ENCODE measurements at regions of chr2 and their contacts with region 1.

Region 1: DNA sequence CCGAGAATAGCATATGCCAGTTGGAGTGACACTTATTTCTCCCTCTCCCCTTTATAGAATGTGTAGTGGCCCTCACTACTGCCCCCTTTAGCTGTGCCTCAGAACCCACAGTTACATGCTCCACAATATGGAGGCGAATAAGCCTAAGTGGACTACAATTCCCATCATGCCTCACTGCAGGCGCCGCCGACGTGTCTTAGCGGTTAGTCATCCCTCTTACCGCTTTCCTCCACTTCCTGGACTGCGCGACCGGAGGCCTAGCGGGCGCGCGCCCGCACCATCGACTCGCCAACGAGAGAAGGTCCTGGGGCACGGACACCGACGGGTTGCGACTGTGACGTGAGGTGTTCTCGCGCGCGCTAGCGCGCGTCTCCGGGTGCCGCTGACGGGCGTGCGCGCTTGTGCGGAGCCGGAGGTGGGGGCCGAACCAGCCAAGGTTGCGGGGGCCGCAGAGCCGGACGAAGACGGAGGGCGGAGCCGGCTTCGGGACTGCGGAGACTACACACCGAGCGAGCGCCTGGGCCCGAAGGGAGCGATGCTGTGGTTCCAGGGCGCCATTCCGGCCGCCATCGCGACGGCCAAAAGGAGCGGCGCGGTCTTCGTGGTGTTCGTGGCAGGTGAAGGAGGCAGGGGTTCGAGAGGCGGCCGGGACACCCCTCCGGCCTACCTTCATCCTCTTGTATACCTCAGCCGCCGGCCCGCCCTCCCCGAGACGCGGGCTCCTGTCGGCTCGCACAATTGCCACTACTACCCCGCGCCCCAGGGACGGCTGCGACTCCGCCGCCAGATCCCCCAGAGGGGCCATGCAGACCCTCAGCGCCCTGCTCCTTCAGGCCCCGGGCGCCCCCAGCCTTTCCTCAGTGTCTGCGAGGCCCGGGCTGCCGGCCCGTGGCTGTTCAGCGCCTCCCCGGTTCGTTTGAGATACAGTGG is at the start of gene UBXN4:
- DNase-seq: peak; percentile 96
- ATAC-seq: peak; percentile 91
- H3K4me3 ChIP-seq: peak within 1 kb of the TSS; percentile 95
- H3K27ac ChIP-seq: peak within 1 kb of the TSS; percentile 74
- H3K4me1 ChIP-seq: 0 out of 2 replicates have a peak, but pooled peaks cover 5% of the 10 kb centered on the region
- H3K27me3 ChIP-seq: no peaks in the 10 kb centered on the region
- CTCF ChIP-seq: peak; percentile 49 to 66 (median 50); a peak in 5 of 6 replicates
- EP300 ChIP-seq: no peak
- POLR2A ChIP-seq: peak; percentile 97
- RAD21 ChIP-seq: no peak
- polyA plus RNA-seq, gene UBXN4: 52.6 to 79.4 TPM

Region 2: DNA sequence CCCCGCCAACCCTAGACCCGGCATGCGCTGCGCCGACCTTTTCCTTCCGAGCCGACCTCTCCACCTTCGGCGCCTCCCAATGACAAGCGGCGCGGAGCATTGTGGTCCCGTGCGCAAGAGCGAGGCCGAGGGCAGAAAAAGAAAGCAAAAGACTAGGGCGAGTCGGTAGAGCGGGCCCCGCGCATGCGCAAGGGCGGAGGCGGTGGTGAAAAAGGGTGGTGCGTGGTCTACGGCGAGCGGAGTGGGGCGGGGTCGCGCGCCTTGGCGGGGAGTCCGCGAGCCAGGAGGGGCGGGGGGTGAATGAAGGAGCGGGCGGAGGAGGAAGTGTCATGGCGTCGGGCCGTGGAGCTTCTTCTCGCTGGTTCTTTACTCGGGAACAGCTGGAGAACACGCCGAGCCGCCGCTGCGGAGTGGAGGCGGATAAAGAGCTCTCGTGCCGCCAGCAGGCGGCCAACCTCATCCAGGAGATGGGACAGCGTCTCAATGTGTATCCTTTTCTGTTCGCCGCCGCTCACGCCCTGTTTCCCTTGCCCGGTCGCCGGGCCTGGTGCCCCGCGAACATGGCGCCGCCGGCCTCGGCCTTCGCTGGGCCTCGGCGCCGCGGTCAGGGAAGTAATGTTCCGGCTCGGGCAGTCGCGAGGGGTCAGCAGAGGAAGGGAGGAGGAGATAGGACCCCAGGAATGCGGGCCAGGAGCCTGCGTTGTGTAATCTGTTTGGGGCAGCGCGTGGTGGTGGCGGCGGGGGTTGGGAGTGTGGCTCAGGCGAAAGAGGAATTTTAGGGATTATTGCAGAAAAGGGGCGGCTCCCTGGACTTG is 822.9 kb before region 1 on chr2 and contains the start of gene CCNT2:
- CTCF ChIA-PET with region 1: no interaction called
- POLR2A ChIA-PET with region 1: no interaction called
- RAD21 ChIA-PET with region 1: no interaction called
- SMC1A ChIA-PET with region 1: no interaction called
- in situ Hi-C with region 1: no loop called
- intact Hi-C with region 1: loop called (anchors 5 kb)
- DNase-seq: peak; percentile 95
- ATAC-seq: peak; percentile 89
- H3K4me3 ChIP-seq: peak within 1 kb of the TSS; percentile 91
- H3K27ac ChIP-seq: peak within 1 kb of the TSS; percentile 99
- H3K4me1 ChIP-seq: peaks cover 6% of the 10 kb centered on the region
- H3K27me3 ChIP-seq: no peaks in the 10 kb centered on the region
- CTCF ChIP-seq: no peak
- EP300 ChIP-seq: peak in 1 of 2 experiments; percentile 35; a peak in 1 of 4 replicates
- POLR2A ChIP-seq: peak; percentile 91
- RAD21 ChIP-seq: no peak
- polyA plus RNA-seq, gene CCNT2: 6.0 to 7.6 TPM

Region 3: DNA sequence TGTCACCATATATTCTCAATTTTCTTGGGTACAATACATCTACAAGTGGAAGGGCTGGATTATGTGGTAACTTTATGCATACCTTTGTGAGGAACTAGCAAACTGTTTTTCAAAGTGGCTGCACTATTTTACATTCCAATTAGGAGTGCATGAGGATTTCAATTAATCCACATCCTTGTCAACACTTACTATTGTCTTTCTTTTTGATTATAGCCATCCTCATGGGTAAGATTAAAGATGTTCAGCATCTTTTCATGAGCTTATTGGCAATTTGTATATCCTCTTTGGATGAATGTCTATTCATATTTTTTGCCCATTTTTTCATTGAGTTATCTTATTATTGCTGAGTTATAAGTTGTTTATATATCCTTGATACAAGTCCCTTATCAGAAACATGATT is 284.4 kb before region 1 on chr2:
- CTCF ChIA-PET with region 1: no interaction called
- POLR2A ChIA-PET with region 1: interaction called, 11 read pairs
- RAD21 ChIA-PET with region 1: no interaction called
- SMC1A ChIA-PET with region 1: no interaction called
- in situ Hi-C with region 1: no loop called
- intact Hi-C with region 1: no loop called
- DNase-seq: no peak
- ATAC-seq: no peak
- H3K4me3 ChIP-seq: no peak overlapping the region
- H3K27ac ChIP-seq: no peak overlapping the region
- H3K4me1 ChIP-seq: no peaks in the 10 kb centered on the region
- H3K27me3 ChIP-seq: no peaks in the 10 kb centered on the region
- CTCF ChIP-seq: no peak
- EP300 ChIP-seq: no peak
- POLR2A ChIP-seq: no peak
- RAD21 ChIP-seq: no peak

Region 4: GRCh38 chr2:135531231-135532228 is 210.1 kb before region 1 on chr2 and contains the start of gene R3HDM1:
- CTCF ChIA-PET with region 1: interaction called, 4 read pairs
- POLR2A ChIA-PET with region 1: no interaction called
- RAD21 ChIA-PET with region 1: interaction called, 4 read pairs
- SMC1A ChIA-PET with region 1: interaction called, 4 read pairs
- in situ Hi-C with region 1: no loop called
- intact Hi-C with region 1: loop called (anchors 2 kb)
- DNase-seq: peak; percentile 100
- ATAC-seq: peak; percentile 89
- H3K4me3 ChIP-seq: peak within 1 kb of the TSS; percentile 89
- H3K27ac ChIP-seq: peak within 1 kb of the TSS; percentile 99
- H3K4me1 ChIP-seq: peaks cover 3% of the 10 kb centered on the region; the same call in 1 of the 2 replicates
- H3K27me3 ChIP-seq: no peaks in the 10 kb centered on the region
- CTCF ChIP-seq: peak in 2 of 3 experiments; percentile 6 to 27; a peak in 1 of 6 replicates
- EP300 ChIP-seq: no peak
- POLR2A ChIP-seq: peak; percentile 76
- RAD21 ChIP-seq: peak; percentile 48
- polyA plus RNA-seq, gene R3HDM1: 16.8 to 16.9 TPM

Region 5: DNA sequence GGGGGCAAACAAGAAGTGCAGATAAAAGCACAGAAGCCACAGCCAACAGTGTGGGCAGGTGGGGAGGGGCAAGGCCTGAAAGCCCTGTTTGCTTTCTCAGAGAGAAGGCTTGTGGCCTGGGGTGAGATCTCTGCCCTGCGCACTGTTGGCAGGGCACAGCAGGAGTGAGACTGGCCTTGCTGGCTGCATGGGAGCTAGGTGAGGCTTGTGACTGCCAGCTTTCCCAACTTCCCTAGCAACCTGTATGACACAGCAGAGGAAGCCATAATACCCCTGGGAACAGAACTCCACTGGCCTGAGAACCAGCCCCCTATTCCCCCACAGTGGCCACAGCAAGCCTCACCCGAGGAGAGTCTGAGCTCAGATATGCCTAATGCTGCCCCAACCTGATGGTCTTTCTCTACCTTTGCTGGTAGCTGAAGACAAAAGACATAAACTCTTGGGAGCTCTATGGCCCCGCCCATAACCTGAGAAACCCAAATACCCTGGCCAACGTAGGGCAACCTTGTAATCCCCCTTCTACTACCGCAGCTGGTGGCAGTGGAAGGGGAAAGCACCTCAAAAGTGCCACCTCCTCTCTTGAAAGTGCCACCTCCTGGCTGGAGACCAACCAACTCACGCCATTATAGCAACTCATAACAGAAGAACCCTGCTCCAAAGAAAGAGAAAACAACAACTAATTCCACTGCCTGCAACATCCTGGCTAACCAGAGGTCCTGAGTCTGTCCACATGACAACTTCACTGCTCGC is 50.9 kb after region 1 on chr2:
- CTCF ChIA-PET with region 1: interaction called, 46 read pairs
- POLR2A ChIA-PET with region 1: interaction called, 5 read pairs
- RAD21 ChIA-PET with region 1: interaction called, 4 read pairs
- SMC1A ChIA-PET with region 1: interaction called, 14 read pairs
- in situ Hi-C with region 1: no loop called
- intact Hi-C with region 1: no loop called
- DNase-seq: peak; percentile 51
- ATAC-seq: peak; percentile 79
- H3K4me3 ChIP-seq: no peak overlapping the region; the same call in 1 of the 2 replicates
- H3K27ac ChIP-seq: peak overlapping the region; percentile 35; the same call in 1 of the 2 replicates
- H3K4me1 ChIP-seq: peaks cover 12% of the 10 kb centered on the region
- H3K27me3 ChIP-seq: no peaks in the 10 kb centered on the region
- CTCF ChIP-seq: no peak
- EP300 ChIP-seq: no peak
- POLR2A ChIP-seq: no peak
- RAD21 ChIP-seq: no peak

Region 6: GRCh38 chr2:135851858-135852257 is 110.2 kb after region 1 on chr2:
- CTCF ChIA-PET with region 1: no interaction called
- POLR2A ChIA-PET with region 1: interaction called, 4 read pairs
- RAD21 ChIA-PET with region 1: no interaction called
- SMC1A ChIA-PET with region 1: interaction called, 4 read pairs
- in situ Hi-C with region 1: no loop called
- intact Hi-C with region 1: loop called (anchors 5 kb)
- DNase-seq: no peak
- ATAC-seq: no peak
- H3K4me3 ChIP-seq: no peak overlapping the region
- H3K27ac ChIP-seq: no peak overlapping the region
- H3K4me1 ChIP-seq: no peaks in the 10 kb centered on the region
- H3K27me3 ChIP-seq: no peaks in the 10 kb centered on the region
- CTCF ChIP-seq: no peak
- EP300 ChIP-seq: no peak
- POLR2A ChIP-seq: no peak
- RAD21 ChIP-seq: no peak

Region 7: GRCh38 chr2:135870571-135870970 is 128.9 kb after region 1 on chr2:
- CTCF ChIA-PET with region 1: no interaction called
- POLR2A ChIA-PET with region 1: interaction called, 4 read pairs
- RAD21 ChIA-PET with region 1: no interaction called
- SMC1A ChIA-PET with region 1: no interaction called
- in situ Hi-C with region 1: no loop called
- intact Hi-C with region 1: loop called (anchors 5 kb)
- DNase-seq: no peak
- ATAC-seq: peak; percentile 63
- H3K4me3 ChIP-seq: no peak overlapping the region
- H3K27ac ChIP-seq: no peak overlapping the region
- H3K4me1 ChIP-seq: peaks cover 4% of the 10 kb centered on the region; the same call in 1 of the 2 replicates
- H3K27me3 ChIP-seq: no peaks in the 10 kb centered on the region
- CTCF ChIP-seq: no peak
- EP300 ChIP-seq: no peak
- POLR2A ChIP-seq: no peak
- RAD21 ChIP-seq: no peak

Region 8: DNA sequence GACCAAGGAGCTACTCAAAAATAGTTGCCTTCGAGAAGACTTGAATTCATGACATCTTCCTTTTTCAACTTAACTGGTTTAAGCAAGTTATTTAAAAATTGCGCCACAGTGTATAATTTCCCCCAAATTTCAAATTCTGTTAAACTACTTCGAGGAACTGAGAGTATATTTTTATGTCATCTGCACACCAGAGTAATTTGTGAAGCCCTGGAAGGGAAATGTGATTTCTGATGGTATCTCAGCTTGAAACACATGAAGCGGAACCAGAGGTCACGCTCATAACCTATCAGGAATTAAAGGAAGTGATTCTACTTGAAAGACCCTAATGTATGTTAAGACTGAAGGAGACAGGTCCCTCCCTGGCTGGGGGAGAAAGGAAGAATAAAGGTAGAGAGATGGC is 277.6 kb after region 1 on chr2:
- CTCF ChIA-PET with region 1: no interaction called
- POLR2A ChIA-PET with region 1: no interaction called
- RAD21 ChIA-PET with region 1: no interaction called
- SMC1A ChIA-PET with region 1: no interaction called
- in situ Hi-C with region 1: no loop called
- intact Hi-C with region 1: no loop called
- DNase-seq: peak; percentile 40
- ATAC-seq: peak; percentile 78
- H3K4me3 ChIP-seq: no peak overlapping the region
- H3K27ac ChIP-seq: no peak overlapping the region
- H3K4me1 ChIP-seq: peaks cover 8% of the 10 kb centered on the region
- H3K27me3 ChIP-seq: no peaks in the 10 kb centered on the region
- CTCF ChIP-seq: no peak
- EP300 ChIP-seq: peak; percentile 78 to 87; a peak in 2 of 4 replicates
- POLR2A ChIP-seq: no peak
- RAD21 ChIP-seq: 0 out of 2 replicates have a peak, but pooled peaks have one; percentile 6

Region 9: DNA sequence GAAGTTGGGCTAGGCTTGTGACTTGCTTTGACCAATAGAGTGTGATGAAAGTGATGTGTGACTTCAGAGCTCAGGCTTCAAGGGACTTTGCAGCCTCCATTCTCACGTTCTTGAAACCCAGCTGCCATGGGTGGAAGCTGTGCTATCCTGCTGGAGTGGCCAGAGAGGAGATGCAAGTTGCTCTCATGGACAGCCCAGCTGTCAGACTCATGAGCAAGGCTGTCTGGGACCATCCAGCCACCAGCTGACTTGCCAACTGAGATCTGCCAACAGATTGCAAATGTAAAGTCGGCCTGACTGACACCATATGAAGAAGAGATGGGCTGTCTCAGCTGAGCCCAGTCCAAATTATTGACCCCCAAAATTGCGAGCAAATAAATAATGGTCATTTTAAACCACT is 602.7 kb after region 1 on chr2:
- CTCF ChIA-PET with region 1: no interaction called
- POLR2A ChIA-PET with region 1: no interaction called
- RAD21 ChIA-PET with region 1: no interaction called
- SMC1A ChIA-PET with region 1: no interaction called
- in situ Hi-C with region 1: no loop called
- intact Hi-C with region 1: no loop called
- DNase-seq: no peak
- ATAC-seq: no peak
- H3K4me3 ChIP-seq: no peak overlapping the region
- H3K27ac ChIP-seq: no peak overlapping the region
- H3K4me1 ChIP-seq: no peaks in the 10 kb centered on the region
- H3K27me3 ChIP-seq: 0 out of 4 replicates have a peak, but pooled peaks cover 0 to 2% of the 10 kb centered on the region in 2 experiments
- CTCF ChIP-seq: no peak
- EP300 ChIP-seq: no peak
- POLR2A ChIP-seq: no peak
- RAD21 ChIP-seq: no peak